Colonic mucosa (tissue), 4 donors: ENCODE measurements at regions of chr10 and their contacts with region 1.

Region 1: DNA sequence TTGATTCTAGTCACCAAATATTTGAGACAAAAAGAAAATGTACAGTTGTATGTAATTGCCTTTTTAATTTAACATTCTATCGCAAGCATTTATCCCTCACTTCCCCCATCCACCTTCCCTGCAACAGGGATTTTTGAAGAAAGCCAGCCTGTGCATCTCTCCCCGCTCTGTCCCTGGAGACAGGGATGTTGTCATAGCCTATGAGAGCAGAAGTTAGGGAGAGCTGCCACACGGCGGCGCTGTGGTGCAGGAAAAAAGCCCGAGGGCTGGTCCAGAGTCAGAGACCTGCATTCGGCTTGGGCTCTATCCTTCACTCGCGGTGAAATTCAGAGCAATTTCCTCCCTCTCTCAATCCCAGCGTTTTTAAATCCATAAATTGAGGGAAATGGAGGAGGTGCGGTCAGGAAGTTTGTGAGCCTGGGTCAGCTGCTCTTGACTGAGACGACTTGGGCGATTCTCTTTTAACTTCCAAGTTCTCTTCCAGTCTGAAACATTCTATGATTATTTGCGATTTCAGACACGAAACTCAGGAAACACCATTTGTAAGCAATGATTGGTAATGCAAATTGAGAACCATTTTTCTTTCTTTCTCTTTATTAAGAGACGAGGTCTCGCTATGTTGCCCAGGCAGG is 17.5 kb downstream of the HKDC1 start:
- DNase-seq: peak; percentile 90
- H3K4me3 ChIP-seq: no peak overlapping the region
- H3K27ac ChIP-seq: no peak overlapping the region
- H3K4me1 ChIP-seq: no peaks in the 10 kb centered on the region
- H3K27me3 ChIP-seq: no peaks in the 10 kb centered on the region
- CTCF ChIP-seq: peak; percentile 93

Region 2: DNA sequence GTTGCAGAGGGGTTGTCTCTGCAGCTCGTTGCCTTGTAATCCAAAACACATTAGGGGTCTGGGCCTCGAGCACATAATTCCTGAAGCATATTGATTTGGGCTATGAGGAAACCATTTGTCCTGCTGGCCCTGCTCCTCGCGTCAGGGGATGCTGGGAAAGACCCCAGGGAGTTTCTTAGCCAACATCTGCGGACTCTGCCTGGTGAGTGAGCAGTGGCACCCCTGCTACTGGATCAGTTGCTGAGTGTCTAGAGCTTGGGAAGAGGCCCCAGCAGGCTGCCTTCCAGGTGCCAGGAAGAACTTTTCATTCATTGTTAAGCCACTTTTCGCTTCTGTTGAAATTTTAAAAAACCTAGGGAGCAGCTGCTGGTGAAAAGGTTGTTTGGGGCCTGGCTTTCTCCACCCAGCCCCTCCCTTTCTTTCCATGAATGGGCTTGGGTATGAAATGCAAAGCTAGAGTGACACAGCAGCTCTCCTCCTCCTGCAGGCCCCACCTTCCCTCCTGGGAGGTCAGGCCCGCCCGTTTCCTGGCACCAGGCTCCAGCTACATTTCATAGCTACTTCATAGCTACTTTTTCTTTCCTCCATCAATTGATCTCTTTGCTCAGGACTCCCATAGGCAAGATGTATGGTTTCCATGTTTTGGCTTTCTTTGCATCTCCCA is 152.3 kb after region 1 on chr10:
- intact Hi-C with region 1: loop called (anchors 2 kb)
- DNase-seq: no peak
- H3K4me3 ChIP-seq: no peak overlapping the region
- H3K27ac ChIP-seq: no peak overlapping the region
- H3K4me1 ChIP-seq: peaks cover 3% of the 10 kb centered on the region
- H3K27me3 ChIP-seq: no peaks in the 10 kb centered on the region
- CTCF ChIP-seq: no peak